ENCODE measurements at regions of chr1 and their contacts with region 1.

Region 1: DNA sequence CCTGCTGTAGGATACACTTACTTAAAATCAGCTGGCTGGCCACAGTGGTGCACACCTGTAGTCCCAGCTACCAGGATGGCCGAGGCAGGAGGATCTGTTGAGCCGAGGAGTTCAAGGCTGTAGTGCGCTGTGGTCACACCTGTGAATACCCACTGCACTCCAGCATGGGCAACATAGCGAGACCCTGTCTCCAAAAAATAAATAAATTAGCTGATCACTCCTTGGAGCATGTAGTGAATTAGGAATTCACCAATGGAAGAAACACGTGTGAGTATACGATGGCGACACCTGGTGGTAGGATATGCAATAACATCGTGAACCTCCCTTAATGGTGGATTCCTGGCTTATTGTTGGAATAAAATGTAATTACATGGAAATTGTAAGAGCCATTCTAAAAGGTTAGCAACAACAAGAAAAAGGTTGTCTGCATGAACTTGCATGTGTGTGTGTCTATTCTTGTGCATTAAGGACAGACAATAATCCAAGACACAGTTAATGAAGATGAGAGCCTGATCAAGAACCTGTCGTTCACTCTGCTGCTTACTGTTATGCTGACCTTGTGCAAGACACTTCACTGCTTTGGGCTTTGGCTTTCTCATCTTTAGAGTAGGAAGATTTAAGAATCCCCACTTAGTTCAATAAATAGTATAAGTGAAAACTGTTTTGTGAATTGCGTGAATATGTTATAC is 38.6 kb upstream of the COX20 start:
- DNase-seq: no peak
- ATAC-seq: peak; percentile 92
- H3K4me3 ChIP-seq: no peak overlapping the region
- H3K27ac ChIP-seq: no peak overlapping the region
- H3K4me1 ChIP-seq: no peaks in the 10 kb centered on the region
- H3K27me3 ChIP-seq: no peaks in the 10 kb centered on the region
- CTCF ChIP-seq: peak; percentile 93

Region 2: DNA sequence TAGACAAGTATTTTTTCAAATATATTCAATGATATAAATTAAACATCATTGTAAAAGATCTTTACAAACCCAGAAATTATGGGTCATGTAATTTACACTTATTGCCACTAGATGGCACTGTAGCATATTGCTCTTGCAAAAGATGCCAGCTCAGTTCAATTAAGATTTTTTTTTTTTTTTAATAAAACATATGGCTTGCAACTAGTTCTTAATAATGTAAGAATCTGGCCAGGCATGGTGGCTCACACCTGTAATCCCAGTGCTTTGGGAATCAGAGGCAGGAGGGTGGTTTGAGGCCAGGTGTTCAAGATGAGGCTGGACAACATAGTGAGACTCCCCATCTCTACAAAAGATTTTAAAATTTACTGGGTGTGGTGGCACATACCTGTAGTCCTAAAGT is 193.4 kb before region 1 on chr1:
- intact Hi-C with region 1: loop called (anchors 2 kb)
- DNase-seq: no peak
- ATAC-seq: peak; percentile 57
- H3K4me3 ChIP-seq: no peak overlapping the region
- H3K27ac ChIP-seq: no peak overlapping the region
- H3K4me1 ChIP-seq: no peaks in the 10 kb centered on the region
- H3K27me3 ChIP-seq: no peaks in the 10 kb centered on the region
- CTCF ChIP-seq: peak; percentile 90